ENCODE measurements at regions of chr22 and their contacts with region 1.

Region 1: GRCh38 chr22:36117053-36117554 is 43.5 kb downstream of the APOL3 start:
- DNase-seq: no peak
- ATAC-seq: peak in 2 of 4 donors; percentile 29 to 39
- H3K4me3 ChIP-seq: no peak overlapping the region
- H3K27ac ChIP-seq: no peak overlapping the region
- H3K4me1 ChIP-seq: peaks cover 0 to 4% (median 0%) of the 10 kb centered on the region in 12 donors
- H3K27me3 ChIP-seq: no peaks in the 10 kb centered on the region
- CTCF ChIP-seq: no peak
- POLR2A ChIP-seq: no peak

Region 2: GRCh38 chr22:35868938-35869337 is 248.2 kb before region 1 on chr22:
- intact Hi-C with region 1: no loop called
- DNase-seq: no peak
- ATAC-seq: no peak
- H3K4me3 ChIP-seq: no peak overlapping the region
- H3K27ac ChIP-seq: peak overlapping the region in 6 of 12 donors; percentile 42 to 73 (median 46)
- H3K4me1 ChIP-seq: peaks cover 0 to 98% (median 60%) of the 10 kb centered on the region in 12 donors
- H3K27me3 ChIP-seq: no peaks in the 10 kb centered on the region
- CTCF ChIP-seq: no peak
- POLR2A ChIP-seq: no peak

Region 3: DNA sequence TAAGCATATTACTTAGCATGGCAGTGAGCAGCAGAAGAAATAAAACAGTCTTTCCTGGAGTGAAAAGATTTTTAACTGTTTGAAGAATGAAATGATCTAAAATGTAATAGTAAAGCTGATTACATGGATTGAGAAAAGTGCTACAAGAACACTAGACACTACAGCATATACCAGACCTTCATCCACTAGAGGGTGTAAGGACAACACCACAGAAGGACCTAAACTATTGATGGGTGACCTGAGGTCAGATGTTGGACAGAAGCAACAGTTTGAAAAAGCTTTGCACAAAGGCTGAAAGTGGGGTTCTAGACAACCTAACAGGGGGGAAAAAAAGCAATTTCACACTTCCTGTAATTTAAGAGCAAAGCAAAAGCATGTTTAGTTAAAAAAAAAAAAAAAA is 186.2 kb before region 1 on chr22:
- intact Hi-C with region 1: loop called in 2 of 10 experiments (anchors 2 to 5 kb)
- DNase-seq: peak in 1 of 5 donors; percentile 57
- ATAC-seq: peak; percentile 86 to 96 (median 94)
- H3K4me3 ChIP-seq: no peak overlapping the region
- H3K27ac ChIP-seq: peak overlapping the region in 1 of 12 donors; percentile 15
- H3K4me1 ChIP-seq: peaks cover 0 to 12% (median 3%) of the 10 kb centered on the region in 12 donors
- H3K27me3 ChIP-seq: no peaks in the 10 kb centered on the region
- CTCF ChIP-seq: peak; percentile 38 to 85 (median 72)
- POLR2A ChIP-seq: no peak

Region 4: DNA sequence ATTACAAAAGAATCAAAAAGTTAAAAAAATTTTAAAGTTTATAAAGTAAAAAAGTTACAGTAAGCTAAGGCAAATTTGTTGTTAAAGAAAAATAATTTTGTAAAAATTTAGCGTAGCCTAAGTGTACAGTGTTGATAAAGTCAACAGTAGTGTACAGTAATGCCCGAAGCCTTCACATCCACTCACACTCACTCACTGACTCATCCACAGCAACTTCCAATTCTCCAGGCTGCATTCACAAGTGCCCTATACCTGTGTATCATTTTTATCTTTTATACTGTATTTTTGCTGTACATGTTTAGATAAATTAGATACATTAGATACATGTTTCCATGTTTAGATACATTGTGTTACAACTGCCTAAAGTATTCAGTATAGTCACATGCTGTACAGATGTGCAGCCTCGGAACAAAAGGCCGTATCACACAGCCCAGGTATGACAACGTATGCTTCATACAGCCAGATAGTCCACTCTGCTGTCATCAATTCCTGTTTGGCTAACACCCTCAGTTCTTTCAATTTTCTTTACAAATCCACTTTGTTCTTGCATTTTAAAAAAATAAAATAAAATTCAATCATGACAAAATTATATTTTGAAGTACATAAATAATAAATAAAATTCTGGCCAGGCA is 169.2 kb before region 1 on chr22:
- intact Hi-C with region 1: loop called in 1 of 10 experiments (anchors 5 kb)
- DNase-seq: no peak
- ATAC-seq: no peak
- H3K4me3 ChIP-seq: no peak overlapping the region
- H3K27ac ChIP-seq: no peak overlapping the region
- H3K4me1 ChIP-seq: peaks cover 0 to 27% (median 5%) of the 10 kb centered on the region in 12 donors
- H3K27me3 ChIP-seq: no peaks in the 10 kb centered on the region
- CTCF ChIP-seq: no peak
- POLR2A ChIP-seq: no peak

Region 5: GRCh38 chr22:36175892-36176291 is 58.8 kb after region 1 on chr22:
- intact Hi-C with region 1: no loop called
- DNase-seq: no peak
- ATAC-seq: no peak
- H3K4me3 ChIP-seq: no peak overlapping the region
- H3K27ac ChIP-seq: no peak overlapping the region
- H3K4me1 ChIP-seq: peaks cover 0 to 8% (median 0%) of the 10 kb centered on the region in 12 donors
- H3K27me3 ChIP-seq: no peaks in the 10 kb centered on the region
- CTCF ChIP-seq: no peak
- POLR2A ChIP-seq: no peak